Vagina (tissue), 2 donors: ENCODE measurements at regions of chr13 and their contacts with region 1.

Region 1: DNA sequence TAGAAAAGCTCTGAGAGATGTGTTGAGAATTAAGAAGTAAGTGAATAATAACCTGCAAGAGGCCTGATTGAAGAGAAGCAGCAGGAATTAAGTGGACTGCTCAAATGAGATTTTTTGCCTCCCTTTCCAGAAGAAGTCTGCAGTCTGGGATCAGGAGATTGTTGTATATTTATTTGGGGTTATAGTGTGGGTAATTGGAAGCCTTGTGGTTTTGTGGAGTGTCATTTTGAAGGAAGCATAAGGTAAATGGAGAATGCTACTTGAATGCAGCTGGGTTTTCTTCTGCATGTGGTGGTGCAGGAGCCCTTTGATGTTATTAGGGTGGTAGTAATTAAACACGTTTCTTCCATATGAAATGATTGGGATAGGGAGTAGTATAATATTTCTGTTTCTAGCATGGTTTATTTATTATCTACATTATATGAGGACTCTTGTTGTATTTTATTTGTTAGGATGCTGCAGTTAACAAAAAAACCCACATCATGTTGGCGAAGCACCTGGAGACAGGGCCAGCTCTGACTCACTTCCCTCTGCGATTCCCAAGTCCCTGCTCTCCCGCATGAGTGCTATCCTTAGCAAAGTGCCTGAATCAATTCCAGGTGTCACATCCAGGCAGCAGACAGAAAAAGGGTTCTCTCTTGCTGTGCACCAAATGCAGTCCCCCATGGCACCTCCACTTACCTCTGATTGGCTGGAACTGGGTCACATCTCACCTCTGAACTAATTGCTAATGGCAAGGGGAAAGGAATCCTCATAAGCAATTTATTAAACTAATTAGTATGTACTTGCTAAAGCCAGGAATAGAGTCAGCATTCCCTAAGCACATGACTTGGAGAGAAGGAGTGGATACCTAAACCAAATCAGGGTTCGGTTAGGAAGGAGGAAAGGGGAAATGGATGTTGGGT is 54.8 kb downstream of the DGKH start:
- DNase-seq: no peak
- H3K4me3 ChIP-seq: no peak overlapping the region
- H3K27ac ChIP-seq: no peak overlapping the region
- H3K4me1 ChIP-seq: peaks cover 8% of the 10 kb centered on the region
- H3K27me3 ChIP-seq: no peaks in the 10 kb centered on the region
- CTCF ChIP-seq: no peak
- POLR2A ChIP-seq: no peak

Region 2: DNA sequence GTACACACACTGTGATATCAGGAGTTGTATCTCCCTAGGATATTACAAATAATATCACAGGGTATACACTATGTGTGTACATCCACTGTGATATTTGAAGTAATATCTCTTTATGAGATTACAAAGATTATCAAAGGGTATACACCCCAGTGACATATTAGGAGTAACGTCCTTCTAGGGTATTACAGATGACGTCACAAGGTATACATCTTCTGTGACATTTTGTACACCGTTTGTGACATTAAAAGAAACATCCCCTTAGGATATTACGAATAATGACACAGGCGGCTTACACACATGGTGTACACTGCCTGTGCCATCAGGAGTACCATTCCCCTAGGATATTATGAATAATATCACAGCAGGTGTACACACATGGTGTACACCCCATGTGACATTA is 659.2 kb before region 1 on chr13:
- intact Hi-C with region 1: no loop called
- DNase-seq: no peak
- H3K4me3 ChIP-seq: no peak overlapping the region
- H3K27ac ChIP-seq: no peak overlapping the region
- H3K4me1 ChIP-seq: no peaks in the 10 kb centered on the region
- H3K27me3 ChIP-seq: no peaks in the 10 kb centered on the region
- CTCF ChIP-seq: no peak
- POLR2A ChIP-seq: no peak

Region 3: GRCh38 chr13:41668130-41668757 is 435.0 kb before region 1 on chr13:
- intact Hi-C with region 1: loop called (anchors 10 kb)
- DNase-seq: no peak
- H3K4me3 ChIP-seq: no peak overlapping the region
- H3K27ac ChIP-seq: no peak overlapping the region
- H3K4me1 ChIP-seq: no peaks in the 10 kb centered on the region
- H3K27me3 ChIP-seq: no peaks in the 10 kb centered on the region
- CTCF ChIP-seq: peak; percentile 71 to 86 (median 76)
- POLR2A ChIP-seq: no peak

Region 4: DNA sequence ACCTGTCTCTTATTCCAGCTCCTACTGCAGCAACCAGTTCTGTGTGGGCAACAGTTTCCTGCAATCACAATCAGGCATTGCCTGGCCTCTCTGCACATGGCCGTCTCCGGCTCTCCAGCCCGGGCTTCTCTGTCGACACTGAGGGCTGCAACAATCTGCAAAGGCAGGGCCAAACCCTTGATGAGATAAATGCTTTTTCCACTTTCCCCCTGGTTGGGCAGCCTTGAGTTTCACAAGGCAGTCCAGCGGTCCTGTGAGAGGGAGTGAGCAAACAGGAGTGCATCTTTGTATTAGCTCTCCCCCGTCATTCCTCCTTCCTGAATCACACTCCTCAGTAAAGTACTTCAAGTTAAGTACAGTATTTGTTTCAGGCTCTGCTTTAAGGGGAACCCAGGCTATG is 101.6 kb before region 1 on chr13:
- intact Hi-C with region 1: no loop called
- DNase-seq: no peak
- H3K4me3 ChIP-seq: no peak overlapping the region
- H3K27ac ChIP-seq: no peak overlapping the region
- H3K4me1 ChIP-seq: no peaks in the 10 kb centered on the region
- H3K27me3 ChIP-seq: no peaks in the 10 kb centered on the region
- CTCF ChIP-seq: no peak
- POLR2A ChIP-seq: no peak